ENCODE measurements at regions of chr7 and their contacts with region 1.

Region 1: DNA sequence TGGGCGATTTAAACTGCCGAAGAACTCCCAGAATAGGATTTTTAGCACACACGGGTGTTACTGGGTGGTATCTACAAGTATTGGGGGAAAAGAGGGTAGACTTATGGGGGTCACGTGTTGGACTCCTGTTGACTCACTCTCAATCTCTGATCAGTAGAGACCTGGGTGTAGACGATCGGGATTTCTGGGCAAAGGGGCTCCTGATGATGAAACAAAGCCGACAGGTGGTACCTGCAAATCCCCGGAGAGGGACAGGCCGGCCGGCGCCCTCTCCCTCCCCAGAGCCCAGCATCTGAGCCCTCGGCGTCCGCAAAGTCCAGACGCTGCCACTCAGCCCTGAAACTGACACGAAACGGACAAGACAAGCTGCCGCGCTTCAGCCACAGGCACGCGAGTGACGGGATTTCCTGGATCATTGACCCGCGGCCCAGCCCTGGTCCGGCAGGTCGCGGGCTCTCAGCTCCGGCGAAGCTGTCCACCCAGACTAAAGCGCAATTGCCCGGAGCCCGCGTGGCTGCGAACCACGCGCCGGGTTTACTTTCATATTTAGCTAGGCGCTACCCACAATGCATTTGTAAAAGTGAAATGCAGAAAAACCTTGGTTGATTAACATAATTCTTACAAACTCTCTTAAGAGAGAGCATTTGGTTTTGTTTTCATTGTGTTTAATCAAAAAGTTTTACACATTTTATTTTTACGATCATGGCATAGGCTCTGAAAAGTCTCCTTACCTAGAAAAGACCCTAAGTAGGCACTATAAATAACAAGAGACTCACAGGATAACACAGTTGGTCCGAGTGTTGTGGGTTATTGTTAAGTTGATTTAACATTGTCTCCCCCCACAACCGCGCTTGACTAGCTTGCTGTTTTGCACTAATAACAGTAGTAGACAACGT is 56.9 kb upstream of the EZH2 start:
- DNase-seq: peak; percentile 90
- H3K4me3 ChIP-seq: peak overlapping the region; percentile 85 to 98 (median 88)
- H3K27ac ChIP-seq: peak overlapping the region; percentile 91
- H3K4me1 ChIP-seq: peaks cover 13% of the 10 kb centered on the region
- H3K27me3 ChIP-seq: no peaks in the 10 kb centered on the region
- CTCF ChIP-seq: no peak
- POLR2A ChIP-seq: peak; percentile 42

Region 2: GRCh38 chr7:148575640-148576411 is 365.1 kb before region 1 on chr7:
- CTCF ChIA-PET with region 1: interaction called, 18 read pairs
- POLR2A ChIA-PET with region 1: no interaction called
- dilution Hi-C with region 1: no loop called
- intact Hi-C with region 1: loop called (anchors 5 kb)
- DNase-seq: peak; percentile 71
- H3K4me3 ChIP-seq: no peak overlapping the region
- H3K27ac ChIP-seq: no peak overlapping the region
- H3K4me1 ChIP-seq: no peaks in the 10 kb centered on the region
- H3K27me3 ChIP-seq: no peaks in the 10 kb centered on the region
- CTCF ChIP-seq: peak; percentile 81 to 82
- POLR2A ChIP-seq: no peak

Region 3: DNA sequence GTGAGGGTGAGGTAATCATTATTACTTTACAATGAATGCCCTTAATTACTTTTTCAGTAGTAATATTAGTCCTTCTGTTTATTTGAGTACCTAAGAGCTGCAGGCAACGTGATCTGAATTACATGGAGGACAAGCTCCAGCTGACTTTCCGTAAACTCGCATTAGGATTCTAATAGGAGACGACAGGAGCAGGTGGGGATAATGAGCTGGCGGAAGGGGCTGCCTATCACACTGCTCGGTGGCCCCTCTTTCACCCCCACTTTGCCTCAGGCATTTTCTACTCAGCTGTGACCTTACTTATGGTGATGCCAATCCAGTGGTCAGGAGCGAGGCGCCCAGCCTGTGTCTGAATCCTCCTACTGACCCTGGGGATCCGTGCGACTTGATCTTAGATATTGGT is 350.5 kb before region 1 on chr7 and contains the start of gene C7orf33:
- CTCF ChIA-PET with region 1: no interaction called
- POLR2A ChIA-PET with region 1: no interaction called
- dilution Hi-C with region 1: no loop called
- intact Hi-C with region 1: no loop called
- DNase-seq: no peak
- H3K4me3 ChIP-seq: no peak within 1 kb of the TSS
- H3K27ac ChIP-seq: no peak within 1 kb of the TSS
- H3K4me1 ChIP-seq: no peaks in the 10 kb centered on the region
- H3K27me3 ChIP-seq: no peaks in the 10 kb centered on the region
- CTCF ChIP-seq: no peak
- POLR2A ChIP-seq: no peak
- total RNA-seq, gene C7orf33: not detected in 2 replicates

Region 4: DNA sequence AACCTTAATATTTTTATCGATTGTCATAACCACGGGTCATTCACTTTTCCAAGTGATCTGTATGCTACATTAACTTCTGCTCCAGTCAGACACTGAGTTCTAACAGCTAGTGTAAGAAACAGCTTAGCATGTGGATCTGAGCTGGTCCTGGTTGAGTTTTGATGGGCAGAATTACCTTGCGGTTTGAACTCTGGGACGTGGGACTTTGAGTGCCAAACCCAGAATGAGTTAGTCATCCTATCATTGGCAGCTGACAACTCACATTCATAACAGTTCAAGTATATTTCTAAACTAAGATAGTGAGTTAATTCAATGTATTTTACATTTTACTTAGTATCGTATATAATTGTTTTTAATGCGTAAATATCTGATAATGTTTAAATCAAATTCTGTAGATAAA is 307.2 kb before region 1 on chr7:
- CTCF ChIA-PET with region 1: no interaction called
- POLR2A ChIA-PET with region 1: interaction called, 10 read pairs
- dilution Hi-C with region 1: no loop called
- intact Hi-C with region 1: no loop called
- DNase-seq: no peak
- H3K4me3 ChIP-seq: no peak overlapping the region
- H3K27ac ChIP-seq: no peak overlapping the region
- H3K4me1 ChIP-seq: no peaks in the 10 kb centered on the region
- H3K27me3 ChIP-seq: no peaks in the 10 kb centered on the region
- CTCF ChIP-seq: no peak
- POLR2A ChIP-seq: no peak

Region 5: GRCh38 chr7:148987010-148987750 is 46.2 kb after region 1 on chr7:
- CTCF ChIA-PET with region 1: interaction called, 4 read pairs
- POLR2A ChIA-PET with region 1: no interaction called
- dilution Hi-C with region 1: no loop called
- intact Hi-C with region 1: loop called (anchors 1 kb)
- DNase-seq: peak; percentile 94
- H3K4me3 ChIP-seq: peak overlapping the region; percentile 21 to 63 (median 56)
- H3K27ac ChIP-seq: peak overlapping the region; percentile 32
- H3K4me1 ChIP-seq: peaks cover 11% of the 10 kb centered on the region
- H3K27me3 ChIP-seq: peaks cover 0 to 10% of the 10 kb centered on the region in 2 experiments
- CTCF ChIP-seq: no peak
- POLR2A ChIP-seq: peak; percentile 63

Region 6: GRCh38 chr7:149028346-149029109 is 87.6 kb after region 1 on chr7 and contains the start of gene PDIA4:
- CTCF ChIA-PET with region 1: no interaction called
- POLR2A ChIA-PET with region 1: no interaction called
- dilution Hi-C with region 1: no loop called
- intact Hi-C with region 1: loop called (anchors 1 kb)
- DNase-seq: peak; percentile 100
- H3K4me3 ChIP-seq: peak within 1 kb of the TSS; percentile 80 to 91 (median 90)
- H3K27ac ChIP-seq: peak within 1 kb of the TSS; percentile 56
- H3K4me1 ChIP-seq: peaks cover 12% of the 10 kb centered on the region
- H3K27me3 ChIP-seq: no peaks in the 10 kb centered on the region
- CTCF ChIP-seq: peak in 1 of 2 donors; percentile 50
- POLR2A ChIP-seq: peak; percentile 73
- total RNA-seq, gene PDIA4: 306 and 308 TPM in 2 replicates

Measured in endothelial cell of umbilical vein (primary cell).